GM12878 (cell line): ENCODE measurements at regions of chr1 and their contacts with region 1.

Region 1: DNA sequence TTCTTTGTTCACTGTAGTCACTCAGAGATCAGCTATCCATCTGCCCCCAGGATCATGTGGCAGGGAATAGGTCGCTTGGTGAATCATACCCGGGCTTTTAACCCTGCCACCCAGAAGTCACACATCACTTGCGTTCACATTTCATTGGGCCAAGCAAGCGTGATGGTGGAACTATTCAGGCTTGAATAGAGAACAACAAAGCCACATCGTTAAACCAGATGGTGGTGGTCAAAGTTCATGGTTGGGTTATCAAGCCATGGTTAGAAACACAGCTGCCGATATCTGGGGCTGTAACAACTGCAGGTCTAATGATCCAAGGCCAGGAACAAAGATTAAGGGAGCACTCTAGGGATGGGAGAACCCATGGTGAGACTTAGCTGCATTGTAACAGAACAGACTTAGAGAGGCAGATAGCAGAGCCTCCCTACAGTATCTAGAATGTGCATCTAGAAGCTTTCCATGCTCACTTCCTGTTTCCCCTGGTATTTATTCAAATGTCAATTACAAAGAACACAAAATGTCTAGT is 40.0 kb upstream of the PTPRC start:
- DNase-seq: peak; percentile 89
- ATAC-seq: peak; percentile 88
- H3K4me3 ChIP-seq: peak overlapping the region; percentile 24; the same call in 1 of the 2 replicates
- H3K27ac ChIP-seq: peak overlapping the region; percentile 81
- H3K4me1 ChIP-seq: peaks cover 27% of the 10 kb centered on the region
- H3K27me3 ChIP-seq: no peaks in the 10 kb centered on the region
- CTCF ChIP-seq: no peak
- EP300 ChIP-seq: peak; percentile 63 to 84; a peak in 3 of 4 replicates
- POLR2A ChIP-seq: no peak; the same call in 1 of the 2 replicates
- RAD21 ChIP-seq: no peak

Region 2: GRCh38 chr1:198472113-198472512 is 126.7 kb before region 1 on chr1:
- CTCF ChIA-PET with region 1: interaction called, 3 read pairs
- POLR2A ChIA-PET with region 1: no interaction called
- RAD21 ChIA-PET with region 1: no interaction called
- SMC1A ChIA-PET with region 1: interaction called, 3 read pairs
- in situ Hi-C with region 1: no loop called
- intact Hi-C with region 1: loop called (anchors 5 kb)
- DNase-seq: no peak
- ATAC-seq: no peak
- H3K4me3 ChIP-seq: no peak overlapping the region
- H3K27ac ChIP-seq: no peak overlapping the region
- H3K4me1 ChIP-seq: no peaks in the 10 kb centered on the region
- H3K27me3 ChIP-seq: no peaks in the 10 kb centered on the region
- CTCF ChIP-seq: no peak
- EP300 ChIP-seq: no peak
- POLR2A ChIP-seq: no peak
- RAD21 ChIP-seq: no peak

Region 3: DNA sequence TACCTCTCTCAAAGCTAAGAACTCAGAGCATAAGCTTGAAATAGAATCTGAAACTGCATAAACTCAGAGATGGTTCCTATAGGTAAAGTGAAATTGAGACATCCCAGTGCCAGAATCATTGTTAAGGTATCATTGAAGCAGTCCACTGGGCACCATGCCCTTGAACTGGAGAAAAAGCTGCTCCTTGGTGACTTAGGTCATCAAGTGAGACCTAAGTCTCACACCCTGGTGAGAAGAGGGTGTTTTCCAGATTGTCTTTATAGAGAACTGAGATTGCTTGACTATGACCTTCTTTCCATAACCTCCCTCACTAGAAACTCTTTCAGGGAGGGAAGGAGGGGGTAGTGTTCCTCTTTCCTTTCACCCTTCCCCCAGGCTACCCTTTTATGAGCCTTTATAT is 49.0 kb before region 1 on chr1:
- CTCF ChIA-PET with region 1: interaction called, 3 read pairs
- POLR2A ChIA-PET with region 1: interaction called, 6 read pairs
- RAD21 ChIA-PET with region 1: interaction called, 12 read pairs
- SMC1A ChIA-PET with region 1: interaction called, 12 read pairs
- in situ Hi-C with region 1: no loop called
- intact Hi-C with region 1: no loop called
- DNase-seq: peak; percentile 54
- ATAC-seq: peak; percentile 94
- H3K4me3 ChIP-seq: no peak overlapping the region
- H3K27ac ChIP-seq: no peak overlapping the region
- H3K4me1 ChIP-seq: peaks cover 15% of the 10 kb centered on the region
- H3K27me3 ChIP-seq: no peaks in the 10 kb centered on the region
- CTCF ChIP-seq: no peak
- EP300 ChIP-seq: peak; percentile 13 to 27; a peak in 1 of 4 replicates
- POLR2A ChIP-seq: no peak
- RAD21 ChIP-seq: 0 out of 2 replicates have a peak, but pooled peaks have one; percentile 8

Region 4: DNA sequence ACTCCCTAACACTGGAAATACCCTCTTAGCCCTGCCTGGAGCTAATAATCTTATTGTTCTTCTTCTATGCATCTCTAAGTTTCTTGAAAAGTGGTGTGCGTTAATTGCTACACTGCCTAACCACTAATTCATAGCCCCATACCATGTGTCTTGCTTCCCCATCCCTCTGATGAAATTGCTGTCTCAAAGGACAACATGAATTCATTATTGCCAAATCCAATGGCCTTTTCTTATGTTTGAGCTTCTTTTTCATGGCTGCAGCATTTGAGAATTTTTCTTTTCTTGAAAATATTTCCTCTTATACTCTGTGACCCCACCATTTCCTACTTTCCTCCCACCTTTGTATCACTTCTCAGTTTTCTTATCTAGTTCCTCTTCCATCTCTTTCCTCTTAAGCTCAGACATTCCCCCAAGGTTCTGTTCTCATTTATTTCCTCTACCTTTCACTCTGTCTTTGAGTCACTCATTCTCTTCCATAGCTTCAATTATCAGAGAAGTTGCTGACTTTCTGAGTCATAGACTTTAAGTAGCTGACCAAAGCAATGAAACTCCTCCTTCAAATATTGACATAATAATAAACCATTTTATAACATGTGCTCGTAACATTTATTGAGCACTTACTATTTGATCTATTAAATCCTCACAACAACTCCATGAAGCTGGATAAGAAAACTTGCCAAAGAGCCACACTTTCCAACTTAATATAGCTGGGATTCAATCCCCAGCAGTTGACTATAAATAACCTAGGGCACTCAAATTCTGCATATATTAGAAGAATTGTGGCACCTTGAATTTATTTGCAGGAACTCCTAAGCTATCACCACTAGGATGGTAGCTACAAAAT is 22.8 kb before region 1 on chr1:
- CTCF ChIA-PET with region 1: interaction called, 5 read pairs
- POLR2A ChIA-PET with region 1: no interaction called
- RAD21 ChIA-PET with region 1: interaction called, 12 read pairs
- SMC1A ChIA-PET with region 1: interaction called, 17 read pairs
- in situ Hi-C with region 1: no loop called
- intact Hi-C with region 1: no loop called
- DNase-seq: no peak
- ATAC-seq: peak; percentile 65
- H3K4me3 ChIP-seq: no peak overlapping the region
- H3K27ac ChIP-seq: no peak overlapping the region
- H3K4me1 ChIP-seq: peaks cover 12% of the 10 kb centered on the region
- H3K27me3 ChIP-seq: no peaks in the 10 kb centered on the region
- CTCF ChIP-seq: no peak
- EP300 ChIP-seq: 0 out of 4 replicates have a peak, but pooled peaks of 1 of the 2 experiments have one; percentile 14
- POLR2A ChIP-seq: no peak
- RAD21 ChIP-seq: no peak

Region 5: DNA sequence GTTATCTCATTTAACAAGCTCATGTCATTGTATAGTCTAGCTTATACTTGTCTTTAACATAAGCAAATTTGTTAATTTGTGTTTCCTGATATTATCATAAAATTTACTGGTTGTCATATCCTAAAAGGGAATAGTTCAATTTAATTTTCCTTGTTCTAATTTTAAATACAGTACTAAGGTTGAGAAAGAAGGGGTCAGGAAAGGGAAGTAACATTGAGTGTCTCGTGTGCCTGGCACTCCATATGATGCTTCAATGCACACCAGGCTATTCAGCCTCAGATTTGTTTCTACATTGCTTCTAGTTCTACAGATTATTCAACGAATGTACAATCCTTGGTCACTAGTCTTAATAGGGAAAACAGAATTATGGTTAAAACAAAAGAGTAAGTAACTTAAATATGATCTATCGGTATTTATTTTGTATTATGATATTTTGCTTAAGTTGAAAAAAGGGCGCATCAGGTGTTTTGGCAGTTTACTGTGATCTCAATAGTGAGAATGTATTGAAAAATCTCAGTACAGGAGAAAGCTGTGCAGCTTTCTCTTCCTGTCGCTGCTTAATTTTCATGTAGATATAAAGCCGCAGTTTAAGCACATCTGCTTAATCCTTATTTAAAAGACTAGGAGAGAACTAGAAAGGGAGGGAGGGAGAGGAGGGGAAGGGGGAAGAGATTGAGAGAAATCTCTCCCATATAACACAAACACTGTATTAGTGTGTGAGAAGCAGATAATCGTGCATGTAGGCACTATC is 53.0 kb after region 1 on chr1:
- CTCF ChIA-PET with region 1: no interaction called
- POLR2A ChIA-PET with region 1: interaction called, 10 read pairs
- RAD21 ChIA-PET with region 1: interaction called, 14 read pairs
- SMC1A ChIA-PET with region 1: interaction called, 22 read pairs
- in situ Hi-C with region 1: no loop called
- intact Hi-C with region 1: no loop called
- DNase-seq: no peak
- ATAC-seq: peak; percentile 29
- H3K4me3 ChIP-seq: no peak overlapping the region
- H3K27ac ChIP-seq: peak overlapping the region; percentile 20; the same call in 1 of the 2 replicates
- H3K4me1 ChIP-seq: peaks cover 32% of the 10 kb centered on the region
- H3K27me3 ChIP-seq: no peaks in the 10 kb centered on the region
- CTCF ChIP-seq: no peak
- EP300 ChIP-seq: no peak
- POLR2A ChIP-seq: no peak
- RAD21 ChIP-seq: no peak

Region 6: DNA sequence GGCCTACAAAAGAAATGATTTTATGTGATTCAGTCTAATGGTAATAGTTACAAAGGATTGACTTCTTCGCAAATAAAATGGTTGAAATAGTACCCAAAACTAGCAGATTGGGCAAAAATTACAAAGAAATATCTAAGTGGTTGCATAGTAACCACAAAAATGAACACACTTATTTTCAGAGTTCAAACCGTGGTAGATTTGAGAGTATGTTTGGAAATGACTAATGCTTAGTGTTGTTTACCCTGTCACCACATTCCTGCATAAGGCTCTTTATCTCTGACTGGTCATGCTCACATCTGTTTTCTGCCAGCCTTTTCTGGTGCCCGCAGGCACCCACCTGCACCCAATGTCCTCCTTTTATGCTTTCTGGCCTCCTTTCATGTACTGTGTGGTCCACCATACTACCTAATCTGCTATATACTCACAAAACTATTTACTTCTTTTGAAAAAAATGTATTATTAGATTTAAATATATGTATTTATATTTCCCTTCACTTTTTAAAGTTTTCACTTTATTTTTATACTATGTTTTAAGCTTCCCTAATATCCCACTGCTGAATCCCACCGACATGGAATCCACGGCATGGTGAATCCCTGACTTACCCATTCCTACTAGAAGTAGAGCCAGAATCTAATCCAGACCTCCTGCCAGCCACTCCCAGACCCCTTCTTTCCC is 70.3 kb after region 1 on chr1:
- CTCF ChIA-PET with region 1: interaction called, 3 read pairs
- POLR2A ChIA-PET with region 1: interaction called, 4 read pairs
- RAD21 ChIA-PET with region 1: interaction called, 4 read pairs
- SMC1A ChIA-PET with region 1: interaction called, 26 read pairs
- in situ Hi-C with region 1: no loop called
- intact Hi-C with region 1: no loop called
- DNase-seq: peak; percentile 77
- ATAC-seq: peak; percentile 83
- H3K4me3 ChIP-seq: no peak overlapping the region
- H3K27ac ChIP-seq: peak overlapping the region; percentile 18; the same call in 1 of the 2 replicates
- H3K4me1 ChIP-seq: peaks cover 16% of the 10 kb centered on the region
- H3K27me3 ChIP-seq: no peaks in the 10 kb centered on the region
- CTCF ChIP-seq: no peak
- EP300 ChIP-seq: peak; percentile 27 to 67; a peak in 2 of 4 replicates
- POLR2A ChIP-seq: no peak
- RAD21 ChIP-seq: no peak

Region 7: GRCh38 chr1:199009447-199009846 is 410.6 kb after region 1 on chr1:
- CTCF ChIA-PET with region 1: no interaction called
- POLR2A ChIA-PET with region 1: no interaction called
- RAD21 ChIA-PET with region 1: no interaction called
- SMC1A ChIA-PET with region 1: no interaction called
- in situ Hi-C with region 1: no loop called
- intact Hi-C with region 1: no loop called
- DNase-seq: peak; percentile 48
- ATAC-seq: peak; percentile 83
- H3K4me3 ChIP-seq: peak overlapping the region; percentile 13; the same call in 1 of the 2 replicates
- H3K27ac ChIP-seq: peak overlapping the region; percentile 8; the same call in 1 of the 2 replicates
- H3K4me1 ChIP-seq: peaks cover 11% of the 10 kb centered on the region
- H3K27me3 ChIP-seq: no peaks in the 10 kb centered on the region
- CTCF ChIP-seq: no peak
- EP300 ChIP-seq: peak; percentile 34 to 41; a peak in 1 of 4 replicates
- POLR2A ChIP-seq: no peak
- RAD21 ChIP-seq: peak; percentile 26; the same call in 1 of the 2 replicates